ENCODE measurements at regions of chr1 and their contacts with region 1.

Region 1: DNA sequence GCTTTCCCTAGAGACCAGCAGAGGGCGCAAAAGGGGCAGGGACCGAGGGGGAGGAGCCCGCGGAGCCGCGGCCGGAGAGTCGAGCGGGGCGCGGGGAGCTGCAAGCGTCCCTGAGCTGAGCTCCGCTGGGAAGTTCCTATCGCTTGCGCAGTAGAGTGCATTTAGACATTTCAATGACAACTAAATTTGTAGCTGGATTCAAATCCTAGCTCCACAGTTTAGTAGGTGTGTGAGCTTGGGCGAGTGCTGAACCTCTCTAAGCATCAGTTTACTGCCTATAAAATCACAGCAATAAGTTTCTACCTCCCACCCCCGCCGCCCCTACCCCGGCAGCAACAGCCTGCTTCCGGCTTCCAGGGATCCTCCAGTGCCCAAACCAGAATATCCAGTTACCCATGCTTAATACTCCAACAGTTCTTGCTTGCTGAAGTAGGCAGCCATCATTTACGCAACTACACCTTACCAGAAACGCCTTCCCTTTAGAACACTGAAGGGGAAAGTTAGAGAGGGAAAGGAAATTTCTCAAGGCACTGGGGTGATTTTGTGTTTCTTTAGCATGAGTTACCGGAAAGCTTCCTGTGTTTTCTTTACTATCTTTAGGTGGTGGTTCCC is 9.1 kb downstream of the TLR5 start:
- DNase-seq: peak; percentile 91
- ATAC-seq: peak; percentile 78
- H3K4me3 Mint-ChIP-seq: peak overlapping the region; percentile 69
- H3K27ac Mint-ChIP-seq: peak overlapping the region; percentile 85
- H3K4me1 Mint-ChIP-seq: peaks cover 43% of the 10 kb centered on the region
- H3K27me3 Mint-ChIP-seq: peaks cover 40% of the 10 kb centered on the region
- CTCF ChIP-seq: no peak; the same call in none of the 2 replicates

Region 2: DNA sequence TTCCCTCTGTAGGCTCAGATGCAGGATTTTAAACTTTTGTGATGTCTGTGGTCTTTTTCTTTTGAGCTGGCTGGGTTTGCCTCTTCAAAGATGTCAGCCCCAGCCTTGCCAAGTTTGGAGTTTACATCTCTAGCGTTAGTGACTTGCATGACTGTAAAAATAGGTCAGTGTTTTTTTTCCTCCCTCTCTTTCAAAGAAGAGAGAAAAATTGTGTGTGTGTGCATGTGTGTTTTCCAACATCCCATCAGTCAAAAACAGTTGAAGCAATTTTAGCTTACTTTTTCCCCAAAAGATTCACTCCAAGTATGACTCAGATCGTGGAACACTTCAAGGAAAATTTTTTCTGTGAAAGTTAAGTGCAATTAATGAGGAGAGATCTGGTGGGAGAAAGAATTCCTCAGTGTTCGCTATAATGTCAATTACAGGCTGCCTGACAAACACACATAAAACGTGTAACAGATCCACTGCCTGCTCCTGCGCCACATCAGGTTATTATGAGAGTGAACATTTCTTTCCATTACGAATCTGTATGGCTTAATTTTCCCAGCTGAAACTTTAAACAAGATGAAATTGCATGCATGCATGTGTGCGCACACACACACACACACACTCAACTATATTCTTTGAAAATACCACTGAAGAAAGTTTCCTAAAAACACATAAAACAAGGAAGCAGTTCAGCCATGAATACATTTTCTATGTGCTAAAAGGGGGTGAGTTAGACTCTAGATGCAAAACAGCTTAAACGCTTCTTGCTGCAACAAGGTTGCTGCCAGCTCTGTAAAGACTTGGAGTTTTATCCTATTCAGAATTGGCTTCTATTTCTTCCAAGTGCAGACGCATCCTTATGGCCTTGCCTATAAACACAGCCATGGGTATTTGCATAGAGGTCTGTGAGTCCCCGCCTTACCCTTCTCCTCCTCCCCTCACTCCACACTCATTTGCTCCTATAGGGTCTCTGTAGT is 46.4 kb before region 1 on chr1:
- CTCF ChIA-PET with region 1: interaction called, 56 read pairs
- POLR2A ChIA-PET with region 1: interaction called, 4 read pairs
- DNase-seq: no peak
- ATAC-seq: no peak
- H3K4me3 Mint-ChIP-seq: no peak overlapping the region
- H3K27ac Mint-ChIP-seq: no peak overlapping the region
- H3K4me1 Mint-ChIP-seq: peaks cover 27% of the 10 kb centered on the region
- H3K27me3 Mint-ChIP-seq: peaks cover 58% of the 10 kb centered on the region
- CTCF ChIP-seq: no peak

Region 3: GRCh38 chr1:223175032-223175431 is 41.1 kb after region 1 on chr1:
- CTCF ChIA-PET with region 1: interaction called, 12 read pairs
- POLR2A ChIA-PET with region 1: no interaction called
- DNase-seq: peak; percentile 21
- ATAC-seq: peak; percentile 84
- H3K4me3 Mint-ChIP-seq: no peak overlapping the region
- H3K27ac Mint-ChIP-seq: no peak overlapping the region
- H3K4me1 Mint-ChIP-seq: no peaks in the 10 kb centered on the region; the same call in 1 of the 2 replicates
- H3K27me3 Mint-ChIP-seq: peaks cover 41% of the 10 kb centered on the region
- CTCF ChIP-seq: no peak; the same call in 1 of the 2 replicates

Region 4: GRCh38 chr1:223358826-223359225 is 224.9 kb after region 1 on chr1:
- CTCF ChIA-PET with region 1: interaction called, 40 read pairs
- POLR2A ChIA-PET with region 1: no interaction called
- DNase-seq: no peak
- ATAC-seq: peak; percentile 28; the same call in 1 of the 2 replicates
- H3K4me3 Mint-ChIP-seq: no peak overlapping the region
- H3K27ac Mint-ChIP-seq: no peak overlapping the region
- H3K4me1 Mint-ChIP-seq: peaks cover 13% of the 10 kb centered on the region
- H3K27me3 Mint-ChIP-seq: peaks cover 38% of the 10 kb centered on the region
- CTCF ChIP-seq: no peak

Region 5: GRCh38 chr1:223556414-223557129 is 422.6 kb after region 1 on chr1:
- CTCF ChIA-PET with region 1: interaction called, 20 read pairs
- POLR2A ChIA-PET with region 1: no interaction called
- DNase-seq: peak; percentile 86
- ATAC-seq: peak; percentile 95
- H3K4me3 Mint-ChIP-seq: no peak overlapping the region
- H3K27ac Mint-ChIP-seq: no peak overlapping the region
- H3K4me1 Mint-ChIP-seq: no peaks in the 10 kb centered on the region
- H3K27me3 Mint-ChIP-seq: no peaks in the 10 kb centered on the region
- CTCF ChIP-seq: peak; percentile 77

Measured in WTC11 (cell line).